Lower lobe of right lung (tissue), 2 donors: ENCODE measurements at regions of chr7 and their contacts with region 1.

Region 1: DNA sequence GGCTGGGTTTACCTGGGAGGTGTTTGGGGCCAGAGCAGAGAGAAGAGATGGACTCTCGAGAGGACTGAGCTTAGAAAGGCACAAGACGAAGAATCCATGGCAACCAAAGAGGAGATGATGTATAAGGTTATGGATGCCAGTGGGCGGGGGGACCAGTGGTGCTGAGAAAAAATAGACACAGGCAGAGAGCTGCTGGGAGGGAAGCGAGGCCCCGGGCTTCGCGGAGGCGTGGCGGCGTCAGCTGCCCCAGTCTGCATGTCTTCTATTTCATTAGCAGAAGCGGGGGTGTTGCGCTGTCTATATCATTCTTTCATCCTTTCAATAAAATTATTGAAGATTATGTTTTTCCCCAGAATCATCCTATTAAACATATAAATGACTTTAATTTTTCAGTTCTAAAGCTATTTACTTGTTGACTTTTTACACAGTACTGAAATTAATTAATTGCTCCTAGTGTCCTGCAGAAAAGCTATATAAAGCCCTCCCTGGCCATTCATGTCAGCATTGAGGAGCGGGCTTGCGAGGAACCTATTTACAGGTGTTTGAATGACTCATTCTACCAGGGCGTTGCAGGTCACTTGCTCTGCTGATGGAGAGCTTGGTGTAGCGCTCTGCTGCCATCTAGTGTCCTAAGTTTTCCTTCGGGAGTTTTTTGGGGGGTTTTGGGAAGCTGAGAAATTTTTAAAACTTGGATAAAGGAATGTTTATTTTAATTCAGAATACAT is 42.9 kb upstream of the BHLHA15 start:
- DNase-seq: no peak
- ATAC-seq: peak; percentile 64 to 75
- H3K4me3 ChIP-seq: no peak overlapping the region
- H3K27ac ChIP-seq: no peak overlapping the region
- H3K4me1 ChIP-seq: peaks cover 3% of the 10 kb centered on the region
- H3K27me3 ChIP-seq: no peaks in the 10 kb centered on the region
- CTCF ChIP-seq: peak; percentile 83

Region 2: DNA sequence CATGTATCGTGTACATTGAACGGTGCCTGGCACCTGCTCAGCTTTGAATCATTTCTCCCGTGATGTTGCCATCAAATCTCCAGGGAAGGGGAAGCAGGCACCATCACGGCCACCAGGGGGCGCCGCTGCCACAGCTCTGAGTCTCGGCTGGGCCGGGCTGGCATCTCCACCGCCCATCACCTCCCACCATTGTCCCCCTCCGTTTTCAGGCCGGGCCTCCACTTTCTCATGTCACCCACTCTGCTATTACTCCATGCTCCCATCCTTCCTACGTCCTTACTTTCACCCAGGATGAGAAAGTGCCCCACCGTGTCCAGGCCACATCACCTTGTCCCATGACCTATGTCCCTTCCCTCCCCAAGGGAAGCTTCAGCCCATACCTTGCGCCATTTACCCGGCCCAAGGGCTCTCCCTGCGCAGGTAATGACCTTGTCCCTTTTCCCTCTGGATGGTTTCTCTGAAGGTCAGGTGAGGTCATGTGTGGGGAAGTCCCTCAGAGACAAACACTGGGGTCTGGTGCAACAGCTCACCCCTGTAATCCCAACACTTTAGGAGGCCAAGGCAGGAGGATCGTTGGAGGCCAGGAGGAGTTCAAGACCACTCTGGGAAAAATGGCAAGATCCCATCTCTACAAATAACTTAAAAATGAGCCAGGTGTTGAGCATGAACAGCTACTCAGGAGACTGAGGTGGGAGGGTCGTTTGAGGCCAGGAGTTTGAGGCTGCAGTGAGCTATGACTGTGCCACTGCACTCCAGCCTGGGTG is 146.6 kb before region 1 on chr7:
- intact Hi-C with region 1: loop called (anchors 5 kb)
- DNase-seq: peak; percentile 86
- ATAC-seq: peak; percentile 90 to 91
- H3K4me3 ChIP-seq: no peak overlapping the region
- H3K27ac ChIP-seq: no peak overlapping the region
- H3K4me1 ChIP-seq: no peaks in the 10 kb centered on the region
- H3K27me3 ChIP-seq: no peaks in the 10 kb centered on the region
- CTCF ChIP-seq: peak; percentile 94

Region 3: DNA sequence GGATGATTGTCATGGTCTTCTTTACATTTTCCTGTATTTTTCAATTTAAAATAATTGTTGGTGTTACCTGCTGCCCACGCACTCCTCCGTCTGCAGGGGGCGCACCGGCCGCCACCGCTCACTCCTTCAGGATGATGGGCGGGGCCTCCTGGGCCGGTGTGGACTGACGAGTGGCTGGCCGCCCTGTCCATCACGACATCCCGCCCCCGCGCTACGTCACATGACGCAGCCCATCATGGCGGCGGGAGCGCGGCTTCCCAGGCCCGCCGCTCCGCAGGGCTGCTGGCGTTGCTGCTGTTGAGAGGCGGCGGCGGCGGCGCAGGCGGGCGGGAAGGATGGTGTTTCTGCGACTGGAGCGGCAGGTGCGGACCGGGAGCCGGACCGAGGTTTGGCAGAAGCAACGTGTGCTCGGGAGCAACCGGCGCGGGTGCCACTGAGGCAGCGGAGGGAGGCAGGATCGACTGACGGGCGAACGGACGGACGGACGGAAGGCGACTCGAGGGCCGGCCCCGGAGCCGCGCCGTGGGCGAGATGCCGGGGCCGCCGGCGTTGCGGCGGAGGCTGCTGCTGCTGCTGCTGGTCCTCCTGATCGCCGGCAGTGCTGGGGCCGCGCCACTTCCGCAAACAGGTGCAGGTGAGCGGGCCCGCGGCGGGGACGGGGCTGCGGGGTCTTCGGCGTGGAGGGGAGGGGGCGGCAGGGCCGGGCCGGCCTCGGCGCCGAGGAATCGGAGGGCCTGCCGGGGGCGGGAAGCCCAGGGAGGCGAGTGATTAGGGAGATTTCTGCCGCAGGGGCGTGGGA is 61.5 kb before region 1 on chr7 and contains the start of gene LMTK2:
- intact Hi-C with region 1: loop called (anchors 10 kb)
- DNase-seq: peak; percentile 96
- ATAC-seq: peak; percentile 99 to 100
- H3K4me3 ChIP-seq: peak within 1 kb of the TSS; percentile 98
- H3K27ac ChIP-seq: peak within 1 kb of the TSS; percentile 89
- H3K4me1 ChIP-seq: peaks cover 33% of the 10 kb centered on the region
- H3K27me3 ChIP-seq: no peaks in the 10 kb centered on the region
- CTCF ChIP-seq: peak; percentile 93
- total RNA-seq, gene LMTK2: 24.5 TPM

Region 4: GRCh38 chr7:98418271-98418635 is 249.9 kb after region 1 on chr7:
- intact Hi-C with region 1: no loop called
- DNase-seq: no peak
- ATAC-seq: no peak
- H3K4me3 ChIP-seq: no peak overlapping the region
- H3K27ac ChIP-seq: no peak overlapping the region
- H3K4me1 ChIP-seq: peaks cover 4% of the 10 kb centered on the region
- H3K27me3 ChIP-seq: no peaks in the 10 kb centered on the region
- CTCF ChIP-seq: no peak